Activated CD8-positive, alpha-beta T cell treated with anti-CD3 and anti-CD28 coated beads for 36 hours (primary cell): ENCODE measurements at regions of chr3 and their contacts with region 1.

Region 1: DNA sequence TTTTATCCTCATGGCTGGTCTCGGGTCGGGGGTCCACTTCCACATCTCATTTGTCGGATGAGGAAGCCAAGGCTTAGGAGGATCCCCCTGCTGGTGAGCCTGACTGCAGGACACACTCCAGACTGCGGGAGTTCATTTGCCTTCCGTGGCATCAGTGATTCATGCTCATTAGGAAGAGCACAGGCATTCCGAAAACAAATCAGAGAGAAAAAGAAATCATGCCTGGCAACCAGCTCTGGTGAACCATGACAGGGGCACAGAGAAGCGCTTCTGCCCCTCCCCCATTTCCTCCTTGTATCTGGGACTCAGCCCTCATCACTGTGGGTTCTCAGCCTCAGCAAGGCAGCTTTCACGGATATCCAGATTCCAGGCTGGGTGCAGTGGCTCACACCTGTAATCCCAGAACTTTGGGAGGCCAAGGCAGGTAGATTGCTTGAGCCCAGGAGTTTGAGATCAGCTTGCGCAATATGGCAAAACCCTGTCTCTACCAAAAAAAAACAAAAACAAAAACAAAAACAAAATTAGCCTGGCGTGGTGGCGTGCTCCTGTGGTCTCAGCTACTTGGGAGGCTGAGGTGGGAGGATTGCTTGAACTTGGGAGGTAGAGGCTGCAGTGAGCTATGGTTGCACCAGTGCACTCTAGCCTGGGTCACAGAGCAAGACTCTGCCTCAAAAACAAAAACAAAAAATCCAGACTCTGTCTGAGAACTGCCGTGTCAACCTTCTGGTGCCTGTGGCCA is 28.4 kb downstream of the IRAK2 start:
- DNase-seq: peak; percentile 83
- ATAC-seq: peak; percentile 29
- H3K4me3 Mint-ChIP-seq: peak overlapping the region; percentile 55
- H3K27ac Mint-ChIP-seq: peak overlapping the region; percentile 98
- H3K4me1 Mint-ChIP-seq: peaks cover 83% of the 10 kb centered on the region
- H3K27me3 Mint-ChIP-seq: no peaks in the 10 kb centered on the region
- CTCF ChIP-seq: peak; percentile 32

Region 2: GRCh38 chr3:10142707-10143566 is 50.2 kb before region 1 on chr3:
- CTCF ChIA-PET with region 1: interaction called, 3 read pairs
- POLR2A ChIA-PET with region 1: interaction called, 18 read pairs
- intact Hi-C with region 1: no loop called
- DNase-seq: peak; percentile 33
- ATAC-seq: no peak
- H3K4me3 Mint-ChIP-seq: peak overlapping the region; percentile 89
- H3K27ac Mint-ChIP-seq: peak overlapping the region; percentile 94
- H3K4me1 Mint-ChIP-seq: peaks cover 24% of the 10 kb centered on the region
- H3K27me3 Mint-ChIP-seq: no peaks in the 10 kb centered on the region
- CTCF ChIP-seq: no peak

Region 3: DNA sequence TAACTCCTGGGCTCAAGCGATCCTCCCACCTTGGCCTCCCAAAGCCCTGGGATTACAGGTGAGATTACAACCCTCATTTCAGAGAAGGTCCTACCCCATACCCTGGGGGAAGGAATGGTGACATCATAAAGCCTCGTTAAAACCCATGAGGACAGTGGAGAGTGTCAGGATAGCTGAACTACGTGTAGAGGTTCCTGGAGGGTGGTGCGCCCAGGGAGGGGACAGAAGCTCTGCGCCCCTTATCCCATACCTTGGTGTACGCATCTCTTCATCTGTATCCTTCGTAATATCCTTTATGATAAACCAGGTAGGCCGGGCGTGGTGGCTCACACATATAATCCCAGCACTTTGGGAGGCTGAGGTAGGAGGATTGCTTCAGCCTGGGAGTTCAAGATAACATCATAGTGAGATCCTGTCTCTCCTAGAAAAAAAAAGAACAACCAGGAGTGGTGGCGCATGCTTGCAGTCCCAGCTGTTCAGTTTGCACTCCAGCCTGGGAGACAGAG is 38.2 kb before region 1 on chr3:
- CTCF ChIA-PET with region 1: no interaction called
- POLR2A ChIA-PET with region 1: no interaction called
- intact Hi-C with region 1: no loop called
- DNase-seq: no peak
- ATAC-seq: no peak
- H3K4me3 Mint-ChIP-seq: no peak overlapping the region
- H3K27ac Mint-ChIP-seq: no peak overlapping the region
- H3K4me1 Mint-ChIP-seq: peaks cover 2% of the 10 kb centered on the region
- H3K27me3 Mint-ChIP-seq: no peaks in the 10 kb centered on the region
- CTCF ChIP-seq: no peak

Region 4: DNA sequence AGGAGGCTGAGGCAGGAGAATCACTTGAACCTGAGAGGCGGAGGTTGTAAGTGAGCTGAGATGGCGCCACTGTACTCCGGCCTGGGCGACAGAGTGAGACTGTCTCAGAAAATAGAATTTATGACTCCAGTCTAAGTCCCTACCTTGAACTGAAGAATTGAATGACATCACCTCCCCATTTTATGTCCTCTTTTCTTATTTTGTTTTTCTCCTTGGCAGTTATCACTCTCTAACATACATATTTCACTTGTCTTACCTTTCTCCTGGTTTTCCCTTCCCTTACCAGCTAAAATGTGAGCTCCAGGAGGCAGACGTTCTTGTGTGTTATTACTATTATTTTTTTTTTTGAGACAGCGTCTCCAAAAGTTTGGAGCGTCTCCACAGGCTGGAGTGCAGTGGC is 62.7 kb after region 1 on chr3:
- CTCF ChIA-PET with region 1: no interaction called
- POLR2A ChIA-PET with region 1: no interaction called
- intact Hi-C with region 1: no loop called
- DNase-seq: no peak
- ATAC-seq: no peak
- H3K4me3 Mint-ChIP-seq: no peak overlapping the region
- H3K27ac Mint-ChIP-seq: peak overlapping the region; percentile 0
- H3K4me1 Mint-ChIP-seq: peaks cover 81% of the 10 kb centered on the region
- H3K27me3 Mint-ChIP-seq: no peaks in the 10 kb centered on the region
- CTCF ChIP-seq: no peak